Dorsolateral prefrontal cortex (tissue), 120 donors: ENCODE measurements at regions of chr10 and their contacts with region 1.

Region 1: GRCh38 chr10:64430690-64431323 is 909.6 kb downstream of the REEP3 start:
- DNase-seq: peak in 7 of 10 donors; percentile 20 to 62 (median 42)
- H3K4me3 ChIP-seq: no peak overlapping the region
- H3K27ac ChIP-seq: no peak overlapping the region
- H3K27me3 ChIP-seq: no peaks in the 10 kb centered on the region
- CTCF ChIP-seq: peak in 53 of 56 donors; percentile 24 to 79 (median 55)

Region 2: GRCh38 chr10:63588436-63589167 is 842.2 kb before region 1 on chr10:
- intact Hi-C with region 1: no loop called
- DNase-seq: peak in 1 of 10 donors; percentile 31
- H3K4me3 ChIP-seq: no peak overlapping the region
- H3K27ac ChIP-seq: peak overlapping the region in 41 of 59 donors; percentile 1 to 84 (median 38)
- H3K27me3 ChIP-seq: no peaks in the 10 kb centered on the region
- CTCF ChIP-seq: no peak

Region 3: DNA sequence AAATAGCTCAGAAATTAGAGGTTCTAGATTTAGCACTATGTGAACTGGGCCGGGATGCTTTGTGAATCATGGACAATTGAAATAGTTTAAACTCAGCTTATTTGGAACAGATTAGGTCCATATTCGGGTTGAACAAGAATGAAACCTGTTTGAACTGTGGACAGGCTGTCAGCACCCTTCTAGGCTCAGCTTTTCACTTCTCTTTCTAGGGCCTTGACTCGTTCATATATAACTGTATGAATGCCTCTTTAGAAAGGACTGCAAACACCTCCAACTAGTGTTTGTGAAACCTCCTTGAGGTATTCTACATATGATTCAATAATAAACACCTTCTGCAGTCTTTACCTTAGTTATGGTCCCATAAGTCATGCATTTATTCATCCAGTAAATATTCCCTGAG is 794.0 kb before region 1 on chr10:
- intact Hi-C with region 1: no loop called
- DNase-seq: no peak
- H3K4me3 ChIP-seq: no peak overlapping the region
- H3K27ac ChIP-seq: peak overlapping the region in 6 of 59 donors; percentile 1 to 59 (median 32)
- H3K27me3 ChIP-seq: no peaks in the 10 kb centered on the region
- CTCF ChIP-seq: no peak

Region 4: DNA sequence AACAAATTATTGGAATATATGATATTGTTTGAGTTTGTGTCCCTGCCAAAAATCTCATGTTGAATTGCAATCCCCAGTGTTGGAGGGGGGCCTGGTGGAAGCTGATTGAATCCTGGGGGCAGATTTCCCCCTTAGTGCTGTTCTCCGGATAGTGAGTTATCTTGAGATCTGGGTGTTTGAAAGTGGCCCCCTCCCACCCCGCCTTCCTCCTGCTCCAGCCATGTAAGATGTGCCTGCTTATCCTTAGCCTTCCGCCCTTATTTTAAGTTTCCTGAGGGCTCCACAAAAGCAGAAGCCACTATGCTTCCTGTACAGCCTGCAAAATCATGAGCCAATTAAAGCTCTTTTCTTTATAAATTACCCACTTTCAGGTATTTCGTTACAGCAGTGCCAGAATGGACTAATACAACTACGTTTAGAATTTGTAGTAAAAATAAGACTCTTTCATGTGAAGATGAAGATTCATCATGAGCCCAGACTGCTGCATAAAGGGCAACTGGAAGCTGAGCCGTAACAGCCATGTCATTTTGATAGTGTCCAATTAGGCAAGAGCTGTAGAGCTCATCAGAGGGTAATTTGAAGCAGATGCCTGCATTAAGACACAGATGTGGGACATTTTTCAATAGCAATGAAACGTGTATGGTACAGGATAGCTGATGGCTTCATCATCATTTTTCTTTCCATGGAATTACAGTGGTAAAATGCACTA is 97.6 kb after region 1 on chr10:
- intact Hi-C with region 1: loop called in 1 of 2 experiments (anchors 10 kb)
- DNase-seq: no peak
- H3K4me3 ChIP-seq: no peak overlapping the region
- H3K27ac ChIP-seq: no peak overlapping the region
- H3K27me3 ChIP-seq: no peaks in the 10 kb centered on the region
- CTCF ChIP-seq: no peak